Mammary epithelial cell (primary cell): ENCODE measurements at regions of chr10 and their contacts with region 1.

Region 1: DNA sequence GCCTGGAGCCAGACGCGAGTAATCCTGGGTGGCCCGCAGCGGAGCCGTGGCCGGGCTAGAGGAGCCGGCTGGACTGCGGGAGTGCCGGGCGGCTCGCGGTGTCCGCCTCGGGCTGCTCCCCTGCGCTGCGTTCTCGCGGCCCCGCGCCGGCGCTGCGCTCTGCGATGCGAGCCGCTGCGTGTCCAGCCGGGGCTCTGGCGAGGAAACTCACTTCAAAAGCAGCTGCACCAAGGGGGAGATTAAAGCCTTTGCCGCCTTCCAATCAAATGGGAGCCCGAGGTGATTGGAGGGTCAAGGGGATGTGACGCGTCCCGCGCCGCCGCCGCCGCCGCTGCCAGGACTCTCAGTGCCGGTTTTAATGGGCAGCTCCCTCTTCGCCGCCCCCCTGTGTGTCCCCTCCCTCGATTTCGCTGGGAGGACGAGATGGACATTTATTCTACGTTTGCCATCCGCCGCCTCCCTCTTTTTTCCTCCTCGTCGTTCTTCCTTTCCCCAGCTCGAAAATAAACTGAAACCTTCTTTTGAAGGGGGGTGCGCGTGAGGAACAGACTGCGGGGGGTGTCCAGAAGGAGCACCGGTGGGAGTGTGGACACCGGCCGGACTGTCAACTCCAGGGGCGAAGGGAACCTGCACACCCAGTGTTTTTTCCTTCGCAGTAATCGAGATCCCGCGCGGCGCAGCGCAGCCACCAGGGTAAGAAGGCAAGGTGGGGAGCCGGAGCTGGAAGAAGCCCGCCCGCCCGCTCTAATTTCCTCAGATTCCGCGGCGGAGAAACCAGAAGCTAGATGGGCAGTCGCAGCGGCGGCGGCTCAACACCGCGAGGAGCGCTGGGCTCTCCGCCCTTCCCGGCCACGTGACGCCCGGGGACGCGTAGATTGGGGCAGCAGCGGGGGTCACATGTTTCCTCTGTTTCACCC is at the start of gene ZNF503:
- DNase-seq: peak; percentile 97
- H3K4me3 ChIP-seq: peak within 1 kb of the TSS; percentile 84 to 98 (median 97)
- H3K27ac ChIP-seq: peak within 1 kb of the TSS; percentile 56
- H3K4me1 ChIP-seq: peaks cover 41% of the 10 kb centered on the region
- H3K27me3 ChIP-seq: no peaks in the 10 kb centered on the region
- CTCF ChIP-seq: peak in 1 of 2 donors; percentile 35
- total RNA-seq, gene ZNF503: 14.1 to 33.7 TPM

Region 2: GRCh38 chr10:75350791-75351190 is 51.0 kb before region 1 on chr10:
- CTCF ChIA-PET with region 1: no interaction called
- dilution Hi-C with region 1: no loop called
- in situ Hi-C with region 1: no loop called
- intact Hi-C with region 1: loop called (anchors 2 kb)
- DNase-seq: peak; percentile 49
- H3K4me3 ChIP-seq: no peak overlapping the region
- H3K27ac ChIP-seq: no peak overlapping the region
- H3K4me1 ChIP-seq: peaks cover 8% of the 10 kb centered on the region
- H3K27me3 ChIP-seq: no peaks in the 10 kb centered on the region
- CTCF ChIP-seq: peak; percentile 12 to 18

Region 3: DNA sequence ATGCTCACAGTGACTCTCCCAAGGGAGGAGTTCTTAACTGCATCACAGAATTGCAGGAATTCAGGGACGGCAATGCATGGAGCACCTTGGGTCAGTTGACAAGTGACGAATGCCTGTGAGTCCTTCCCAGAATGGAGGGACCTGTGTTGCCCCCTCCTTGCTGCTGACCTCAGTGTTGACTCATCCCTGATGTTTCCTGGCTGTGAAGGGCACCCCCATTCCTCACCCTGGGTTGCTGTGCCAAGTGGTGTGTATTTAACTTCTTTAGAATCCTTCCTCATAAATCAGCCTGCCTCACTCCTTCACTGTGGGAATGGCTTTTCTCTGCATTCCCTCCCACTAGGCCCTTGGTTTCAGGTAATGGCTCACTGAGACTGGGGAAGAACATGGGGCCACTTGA is 128.5 kb after region 1 on chr10:
- CTCF ChIA-PET with region 1: no interaction called
- dilution Hi-C with region 1: no loop called
- in situ Hi-C with region 1: no loop called
- intact Hi-C with region 1: loop called (anchors 10 kb)
- DNase-seq: peak; percentile 20
- H3K4me3 ChIP-seq: no peak overlapping the region
- H3K27ac ChIP-seq: no peak overlapping the region
- H3K4me1 ChIP-seq: no peaks in the 10 kb centered on the region
- H3K27me3 ChIP-seq: no peaks in the 10 kb centered on the region
- CTCF ChIP-seq: no peak

Region 4: DNA sequence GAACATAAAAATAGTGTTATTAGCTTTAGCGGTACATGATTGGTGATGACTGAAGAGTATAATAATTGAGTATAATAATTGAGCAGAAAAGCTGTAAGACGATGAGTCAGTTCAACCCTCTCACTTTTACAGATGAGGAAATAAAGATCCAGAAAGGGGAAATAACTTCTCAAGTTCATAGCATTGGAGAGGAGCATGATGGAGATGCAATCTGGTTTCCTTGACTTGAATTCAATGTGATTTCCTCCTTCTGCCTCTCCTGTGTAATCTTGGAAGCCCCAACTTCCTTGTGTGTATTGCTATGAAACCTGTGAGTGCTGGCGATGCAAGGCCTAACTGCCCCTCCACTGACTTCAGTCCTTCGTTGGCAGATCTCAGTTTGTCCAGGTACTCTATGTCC is 294.7 kb after region 1 on chr10:
- CTCF ChIA-PET with region 1: no interaction called
- dilution Hi-C with region 1: no loop called
- in situ Hi-C with region 1: no loop called
- intact Hi-C with region 1: no loop called
- DNase-seq: no peak
- H3K4me3 ChIP-seq: no peak overlapping the region
- H3K27ac ChIP-seq: no peak overlapping the region
- H3K4me1 ChIP-seq: no peaks in the 10 kb centered on the region
- H3K27me3 ChIP-seq: peaks cover 7% of the 10 kb centered on the region
- CTCF ChIP-seq: no peak

Region 5: DNA sequence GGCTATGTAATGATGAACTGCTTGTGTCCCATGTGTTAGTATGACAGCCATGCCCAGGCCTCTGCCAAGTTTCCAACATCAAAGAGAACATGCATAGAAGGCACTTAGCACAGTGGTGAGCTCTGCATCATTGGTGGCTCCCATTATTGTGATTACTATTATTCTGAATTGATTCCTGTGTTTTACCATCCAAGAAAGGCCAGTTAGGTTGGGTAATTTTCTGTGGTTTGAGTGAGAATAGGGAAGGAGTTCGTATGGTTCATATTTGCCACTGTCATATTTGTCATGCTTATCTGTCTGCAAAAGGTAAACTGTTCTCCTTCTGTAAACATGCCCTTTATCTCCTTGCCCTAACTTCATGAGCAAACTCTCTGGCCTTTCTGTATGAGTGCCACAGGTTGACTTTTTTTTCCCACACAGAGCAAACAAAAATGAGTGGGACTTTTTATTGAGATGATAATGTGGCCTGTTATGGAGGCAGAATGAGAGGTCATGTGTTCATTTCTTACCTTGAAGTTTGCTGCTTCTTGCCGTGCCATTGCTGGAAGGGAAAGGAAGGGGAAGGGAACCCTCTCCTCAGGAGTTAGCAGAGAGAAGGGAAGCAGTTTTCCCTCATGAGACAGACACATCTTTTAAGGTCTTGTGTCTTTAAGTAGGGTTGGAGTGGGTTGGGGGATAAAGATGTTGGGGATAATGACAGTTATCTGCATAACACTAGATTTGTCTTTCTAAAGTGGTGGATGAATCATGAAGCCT is 331.5 kb after region 1 on chr10:
- CTCF ChIA-PET with region 1: no interaction called
- dilution Hi-C with region 1: no loop called
- in situ Hi-C with region 1: no loop called
- intact Hi-C with region 1: loop called (anchors 10 kb)
- DNase-seq: no peak
- H3K4me3 ChIP-seq: no peak overlapping the region
- H3K27ac ChIP-seq: no peak overlapping the region
- H3K4me1 ChIP-seq: peaks cover 10% of the 10 kb centered on the region
- H3K27me3 ChIP-seq: no peaks in the 10 kb centered on the region
- CTCF ChIP-seq: no peak

Region 6: GRCh38 chr10:75922435-75922834 is 520.6 kb after region 1 on chr10:
- CTCF ChIA-PET with region 1: interaction called, 3 read pairs
- dilution Hi-C with region 1: no loop called
- in situ Hi-C with region 1: loop called (anchors 25 kb)
- intact Hi-C with region 1: loop called (anchors 1 kb)
- DNase-seq: peak; percentile 11
- H3K4me3 ChIP-seq: no peak overlapping the region
- H3K27ac ChIP-seq: no peak overlapping the region
- H3K4me1 ChIP-seq: no peaks in the 10 kb centered on the region
- H3K27me3 ChIP-seq: no peaks in the 10 kb centered on the region
- CTCF ChIP-seq: peak in 1 of 2 donors; percentile 53

Region 7: DNA sequence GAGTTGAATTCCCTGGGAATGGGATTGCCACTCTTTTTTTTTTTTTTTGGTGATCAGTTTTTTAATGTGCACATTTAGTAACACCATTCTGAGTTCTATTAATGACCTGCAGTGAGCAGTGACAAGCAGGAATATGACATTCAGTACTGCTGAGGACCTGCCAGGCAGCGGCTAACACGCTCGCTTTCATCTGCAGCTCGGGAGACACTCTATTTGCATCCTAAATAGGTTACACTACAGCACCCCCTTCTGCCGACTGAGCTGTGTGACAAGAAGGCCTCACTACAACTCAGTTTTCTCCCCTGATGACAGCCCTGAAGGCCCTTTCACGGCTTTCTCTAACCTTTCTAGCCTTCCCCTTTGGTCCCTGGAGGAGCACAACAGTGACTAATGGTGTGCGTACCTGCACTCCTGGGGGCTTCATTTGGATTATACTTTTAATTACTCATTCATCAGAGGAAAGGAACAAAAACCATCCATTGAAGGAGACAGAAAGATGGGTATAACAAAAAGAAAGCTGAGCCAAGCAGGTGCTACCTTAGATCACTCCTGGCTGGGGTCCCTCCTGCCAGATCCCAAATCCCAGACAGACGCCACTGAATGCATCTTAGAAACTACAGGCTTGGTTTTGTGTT is 902.0 kb after region 1 on chr10:
- CTCF ChIA-PET with region 1: no interaction called
- dilution Hi-C with region 1: no loop called
- in situ Hi-C with region 1: no loop called
- intact Hi-C with region 1: loop called (anchors 1 kb)
- DNase-seq: peak; percentile 51
- H3K4me3 ChIP-seq: no peak overlapping the region
- H3K27ac ChIP-seq: no peak overlapping the region
- H3K4me1 ChIP-seq: no peaks in the 10 kb centered on the region
- H3K27me3 ChIP-seq: no peaks in the 10 kb centered on the region
- CTCF ChIP-seq: peak; percentile 69 to 78

Region 8: GRCh38 chr10:77111611-77112550 is 1710.1 kb after region 1 on chr10:
- CTCF ChIA-PET with region 1: no interaction called
- dilution Hi-C with region 1: no loop called
- in situ Hi-C with region 1: no loop called
- intact Hi-C with region 1: loop called (anchors 10 kb)
- DNase-seq: peak; percentile 66
- H3K4me3 ChIP-seq: no peak overlapping the region
- H3K27ac ChIP-seq: no peak overlapping the region
- H3K4me1 ChIP-seq: peaks cover 9% of the 10 kb centered on the region
- H3K27me3 ChIP-seq: no peaks in the 10 kb centered on the region
- CTCF ChIP-seq: peak; percentile 76 to 77